AG04449 (cell line): ENCODE measurements at regions of chr11 and their contacts with region 1.

Region 1: DNA sequence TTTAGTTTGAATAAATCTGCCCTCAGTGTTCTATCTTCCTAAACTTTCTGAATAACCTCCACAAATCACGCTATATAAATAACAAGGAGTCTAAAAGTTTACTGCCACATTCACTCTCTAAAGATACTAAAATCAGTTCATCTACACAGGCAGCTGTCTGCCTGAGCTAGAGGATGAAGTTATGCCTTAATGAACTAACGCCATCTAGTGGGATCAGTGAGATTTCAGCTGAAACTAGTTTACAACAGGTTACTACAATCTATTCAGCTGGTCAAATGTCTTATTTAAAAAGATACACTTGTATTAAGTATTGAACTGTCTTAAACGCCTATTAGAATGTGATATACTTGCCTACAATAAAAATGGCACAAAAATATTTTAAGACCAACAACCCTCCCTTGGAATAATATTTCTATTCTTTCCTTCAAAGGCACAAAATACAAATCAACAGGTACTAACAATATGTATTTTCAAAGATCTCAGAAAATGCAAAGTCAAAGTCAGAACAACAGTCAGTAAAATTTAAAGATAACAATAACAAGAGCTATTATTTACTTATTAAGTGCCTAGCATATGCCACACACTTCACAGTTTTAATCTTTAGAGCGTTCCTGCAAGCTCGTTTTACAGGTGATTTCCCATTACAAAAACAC is 84.1 kb downstream of the LARGE2 start:
- DNase-seq: no peak
- H3K4me3 ChIP-seq: no peak overlapping the region
- CTCF ChIP-seq: peak; percentile 61

Region 2: GRCh38 chr11:45846974-45847910 is 159.3 kb before region 1 on chr11 and contains the start of gene CRY2:
- CTCF ChIA-PET with region 1: interaction called, 10 read pairs
- POLR2A ChIA-PET with region 1: no interaction called
- DNase-seq: peak; percentile 93
- H3K4me3 ChIP-seq: peak within 1 kb of the TSS; percentile 95
- CTCF ChIP-seq: no peak

Region 3: DNA sequence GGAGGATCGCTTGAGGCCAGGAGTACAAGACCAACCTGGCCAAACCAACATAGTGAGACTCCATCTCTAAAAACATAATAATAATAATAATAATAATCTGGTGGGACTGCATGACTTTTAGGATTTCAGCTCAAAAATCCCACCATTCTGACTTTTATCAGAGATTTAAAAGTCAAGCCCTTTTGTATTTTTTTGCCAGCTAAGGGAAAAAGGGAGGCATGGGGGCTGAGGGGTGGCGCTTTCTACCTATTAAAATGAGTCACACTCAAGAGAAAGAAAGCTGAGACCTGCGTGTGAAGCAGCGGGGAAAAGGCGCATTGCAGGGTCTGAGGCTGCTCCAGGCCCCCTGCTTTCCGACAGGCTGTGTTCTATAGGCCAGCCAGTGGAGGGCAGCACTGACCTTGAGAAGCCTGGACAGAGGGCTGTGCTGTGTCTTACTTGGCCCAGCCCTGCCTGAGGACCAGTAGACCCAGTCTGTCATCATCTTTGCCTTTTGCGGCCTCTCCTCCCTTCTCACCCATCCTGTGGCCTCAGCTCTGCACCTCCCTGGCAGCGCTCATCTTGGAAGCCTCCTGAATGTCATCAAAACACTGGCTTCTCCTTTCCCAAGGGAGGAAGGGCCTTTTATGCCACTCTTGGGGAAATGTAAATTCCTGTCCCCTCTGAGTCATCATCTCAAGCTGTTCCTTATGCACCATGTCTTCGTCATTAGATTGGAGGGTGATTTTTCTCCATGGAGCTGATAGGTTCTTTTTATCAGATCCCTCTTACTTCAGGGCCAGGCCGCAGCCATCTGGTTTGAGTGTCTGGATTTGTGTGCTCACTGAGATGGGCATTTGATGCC is 133.8 kb before region 1 on chr11:
- CTCF ChIA-PET with region 1: interaction called, 24 read pairs
- POLR2A ChIA-PET with region 1: no interaction called
- DNase-seq: peak; percentile 72
- H3K4me3 ChIP-seq: no peak overlapping the region
- CTCF ChIP-seq: peak; percentile 87

Region 4: DNA sequence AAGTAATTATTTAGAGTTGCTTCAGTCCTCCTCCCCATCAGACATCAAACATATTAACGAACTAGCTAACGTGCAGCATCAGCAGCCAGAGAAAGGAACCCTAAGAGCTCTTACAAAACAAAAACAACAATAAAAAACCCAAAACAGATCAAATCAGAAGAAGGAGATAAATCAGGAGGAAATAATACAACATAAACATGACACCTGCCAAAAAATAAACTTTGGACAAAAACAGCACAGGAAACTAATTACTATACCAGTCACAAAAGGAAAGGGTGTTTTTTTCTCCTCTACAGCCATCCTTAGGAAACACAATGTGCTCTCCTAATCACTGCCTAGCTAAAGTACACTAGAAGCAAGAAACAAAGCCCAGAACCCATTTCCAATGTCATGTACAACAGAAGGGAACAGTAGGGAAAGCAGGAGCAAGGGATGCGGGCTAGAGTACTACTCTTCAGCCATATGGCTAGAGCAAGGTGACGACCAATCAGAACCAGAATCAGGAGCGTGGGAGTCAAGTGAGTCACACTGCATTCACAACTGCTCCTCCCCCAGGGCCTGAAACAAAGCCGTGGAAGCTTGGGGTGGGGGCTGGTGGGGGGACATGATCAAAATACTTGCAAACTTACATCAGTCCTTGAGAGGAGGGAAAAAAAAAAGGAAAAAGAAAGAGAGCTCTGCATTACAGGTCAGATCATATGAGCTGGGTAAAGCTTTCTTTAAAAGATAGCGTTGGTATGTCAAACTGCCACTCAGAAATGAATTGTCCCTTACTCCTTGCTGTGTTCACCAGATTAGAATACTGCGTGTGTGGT is 23.7 kb before region 1 on chr11:
- CTCF ChIA-PET with region 1: interaction called, 19 read pairs
- POLR2A ChIA-PET with region 1: no interaction called
- DNase-seq: peak; percentile 62
- H3K4me3 ChIP-seq: no peak overlapping the region
- CTCF ChIP-seq: no peak

Region 5: DNA sequence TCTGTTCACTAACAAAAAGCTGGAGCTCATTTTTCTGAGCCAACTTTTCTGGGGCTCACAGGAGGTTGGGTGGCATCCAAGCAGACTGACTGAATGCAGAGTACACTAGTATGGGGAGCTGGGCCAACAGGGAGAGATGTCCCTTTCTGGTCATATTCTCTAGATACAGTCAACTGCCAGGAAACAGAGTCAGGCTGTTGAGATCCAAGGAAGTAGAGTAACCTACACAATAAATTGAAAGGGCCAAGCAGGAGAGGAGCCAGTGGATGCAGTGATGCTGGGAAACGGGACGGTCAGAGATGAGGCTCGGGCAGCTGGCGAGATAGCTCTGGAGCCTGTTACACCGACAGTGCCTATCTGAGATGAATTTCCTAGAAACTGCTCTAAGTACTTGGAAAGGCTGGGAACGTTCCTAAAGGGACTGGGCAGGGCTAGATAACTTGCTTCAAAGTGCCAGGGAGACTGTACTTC is 13.0 kb before region 1 on chr11:
- CTCF ChIA-PET with region 1: interaction called, 33 read pairs
- POLR2A ChIA-PET with region 1: interaction called, 3 read pairs
- DNase-seq: no peak
- H3K4me3 ChIP-seq: no peak overlapping the region
- CTCF ChIP-seq: no peak

Region 6: DNA sequence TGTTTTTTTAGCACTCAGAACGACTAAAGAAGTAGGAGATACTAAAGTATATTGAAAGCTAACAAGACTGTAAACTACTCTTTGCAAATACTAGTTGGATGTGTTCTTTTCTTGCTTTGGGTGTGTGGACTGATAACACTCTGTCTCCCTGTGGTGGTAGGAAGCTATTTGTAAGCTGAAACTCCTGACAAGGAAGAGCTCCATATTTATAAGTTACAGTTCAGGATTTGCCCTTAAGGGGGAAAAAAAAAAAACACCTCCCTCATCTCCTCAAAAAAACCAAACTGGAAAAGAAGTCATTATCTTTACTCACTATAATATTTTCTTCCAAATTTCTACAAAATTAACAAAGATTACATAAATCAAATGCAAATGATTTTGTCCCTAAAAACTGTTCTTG is 10.8 kb after region 1 on chr11:
- CTCF ChIA-PET with region 1: interaction called, 48 read pairs
- POLR2A ChIA-PET with region 1: no interaction called
- DNase-seq: no peak
- H3K4me3 ChIP-seq: no peak overlapping the region
- CTCF ChIP-seq: no peak

Region 7: DNA sequence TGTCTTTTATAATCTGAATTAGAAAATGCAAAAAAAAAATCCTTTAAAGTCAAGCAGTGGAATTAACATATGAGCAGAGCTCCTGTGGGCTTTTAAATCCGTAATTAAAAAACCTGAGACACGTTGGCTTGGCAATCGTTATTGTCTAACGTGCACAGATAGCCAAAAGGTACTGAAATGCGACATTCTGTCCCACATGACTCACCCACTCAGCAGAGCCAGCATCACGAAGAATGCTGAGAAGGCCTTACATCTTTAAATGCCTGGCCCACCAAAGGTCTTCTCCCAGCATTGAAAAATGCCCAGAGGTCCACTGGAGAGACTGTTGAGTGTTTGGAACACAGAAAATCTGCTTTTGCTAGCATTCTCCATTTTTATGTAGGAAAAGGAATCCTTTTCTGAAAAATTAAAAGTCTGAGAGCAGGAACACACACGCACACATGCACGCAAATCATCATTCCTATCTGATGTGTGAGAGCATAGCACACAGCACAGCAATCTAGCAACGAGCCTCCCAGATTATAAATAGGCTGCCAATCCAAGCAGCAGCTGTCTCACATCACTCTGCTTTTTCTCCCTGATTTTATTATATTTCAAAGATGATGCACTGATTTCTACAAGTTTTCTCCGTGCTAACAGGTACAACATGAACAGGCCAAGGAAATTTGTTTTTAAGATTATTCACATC is 20.2 kb after region 1 on chr11:
- CTCF ChIA-PET with region 1: interaction called, 26 read pairs
- POLR2A ChIA-PET with region 1: no interaction called
- DNase-seq: no peak
- H3K4me3 ChIP-seq: no peak overlapping the region
- CTCF ChIP-seq: no peak